ENCODE measurements at regions of chr13 and their contacts with region 1.

Region 1: DNA sequence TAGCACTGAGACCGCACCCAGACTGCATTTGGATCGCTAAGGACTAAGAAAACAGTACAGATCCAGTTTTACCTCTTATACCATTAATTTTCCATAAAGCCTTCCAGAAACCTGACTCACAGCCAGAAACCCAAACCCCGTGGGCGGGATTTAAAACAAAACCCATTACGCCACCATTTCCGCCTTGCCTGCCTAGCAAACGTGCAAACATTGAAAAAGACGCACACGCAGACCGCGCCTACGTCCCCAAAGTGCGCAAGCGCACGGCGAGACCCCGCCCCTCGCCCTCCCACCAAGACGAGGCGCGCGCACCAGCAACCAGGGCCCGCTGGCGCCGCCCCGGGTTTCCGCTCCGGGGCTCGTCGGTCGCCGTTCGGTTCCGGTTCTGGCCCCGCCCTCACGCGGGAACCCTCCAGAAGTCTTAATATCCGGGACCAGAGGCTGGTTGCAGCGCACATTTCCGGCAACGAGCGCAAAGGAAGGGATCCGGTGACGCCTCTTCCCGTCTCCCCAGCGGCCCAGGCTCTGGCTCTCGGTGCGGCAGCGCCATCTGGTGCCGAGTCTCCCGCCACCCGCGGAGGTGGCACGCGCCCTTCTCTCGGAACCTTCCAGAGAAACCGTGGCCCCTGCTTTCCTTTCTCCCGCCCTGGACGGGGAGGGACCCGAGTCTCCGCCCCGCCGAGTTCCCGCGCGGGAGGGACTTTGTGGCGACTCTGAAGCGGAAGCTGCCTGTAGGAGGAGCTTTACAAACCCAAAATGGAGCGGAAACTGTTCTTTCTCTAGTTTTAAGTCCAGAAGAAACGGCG is 256.9 kb upstream of the STARD13 start:
- DNase-seq: peak; percentile 98
- H3K4me3 Mint-ChIP-seq: peak overlapping the region; percentile 80
- H3K27ac Mint-ChIP-seq: peak overlapping the region; percentile 98
- H3K4me1 Mint-ChIP-seq: peaks cover 42% of the 10 kb centered on the region
- H3K27me3 Mint-ChIP-seq: no peaks in the 10 kb centered on the region

Region 2: GRCh38 chr13:32315238-32316027 is 1227.1 kb before region 1 on chr13 and contains the starts of genes BRCA2 and ZAR1L:
- intact Hi-C with region 1: loop called (anchors 1 kb)
- DNase-seq: peak; percentile 85
- H3K4me3 Mint-ChIP-seq: peak within 1 kb of the TSS; percentile 96
- H3K27ac Mint-ChIP-seq: peak within 1 kb of the TSS; percentile 100
- H3K4me1 Mint-ChIP-seq: peaks cover 32% of the 10 kb centered on the region
- H3K27me3 Mint-ChIP-seq: no peaks in the 10 kb centered on the region
- total RNA-seq, gene BRCA2: 18.6 and 19.4 TPM in 2 replicates
- total RNA-seq, gene ZAR1L: not detected in 2 replicates

Region 3: DNA sequence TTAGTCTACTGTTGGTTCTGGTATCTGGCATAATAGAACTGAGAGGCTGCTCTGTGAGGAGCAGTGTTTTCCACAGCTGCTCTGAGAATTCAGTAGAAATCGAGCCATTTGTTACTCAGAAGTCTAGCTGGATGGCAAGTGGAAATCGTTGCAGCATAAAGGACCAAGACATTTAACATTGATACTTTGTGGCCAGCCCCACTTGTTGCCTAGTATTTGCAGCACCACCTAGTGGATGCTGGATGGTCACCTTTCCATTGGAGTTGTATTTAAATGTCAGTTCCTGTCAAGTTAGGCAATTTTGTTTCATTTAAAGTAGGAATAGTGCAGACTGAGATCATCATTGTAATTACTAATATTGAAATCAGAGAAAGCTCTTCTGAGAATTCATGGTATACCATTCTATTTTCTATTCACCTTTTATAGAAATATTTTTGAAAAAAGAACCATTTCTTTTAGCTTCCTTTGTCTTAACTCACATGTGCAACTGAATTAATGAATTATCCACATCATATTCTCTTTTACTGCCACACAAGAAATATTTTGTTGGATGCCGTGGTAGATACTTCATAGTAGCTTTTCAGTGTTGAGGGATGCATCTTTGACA is 891.7 kb before region 1 on chr13:
- intact Hi-C with region 1: loop called (anchors 2 kb)
- DNase-seq: peak; percentile 41
- H3K4me3 Mint-ChIP-seq: no peak overlapping the region
- H3K27ac Mint-ChIP-seq: peak overlapping the region; percentile 70
- H3K4me1 Mint-ChIP-seq: peaks cover 35% of the 10 kb centered on the region
- H3K27me3 Mint-ChIP-seq: no peaks in the 10 kb centered on the region

Region 4: GRCh38 chr13:33072283-33072682 is 470.2 kb before region 1 on chr13:
- intact Hi-C with region 1: loop called (anchors 5 kb)
- DNase-seq: no peak
- H3K4me3 Mint-ChIP-seq: no peak overlapping the region
- H3K27ac Mint-ChIP-seq: no peak overlapping the region
- H3K4me1 Mint-ChIP-seq: peaks cover 19% of the 10 kb centered on the region
- H3K27me3 Mint-ChIP-seq: no peaks in the 10 kb centered on the region

Region 5: DNA sequence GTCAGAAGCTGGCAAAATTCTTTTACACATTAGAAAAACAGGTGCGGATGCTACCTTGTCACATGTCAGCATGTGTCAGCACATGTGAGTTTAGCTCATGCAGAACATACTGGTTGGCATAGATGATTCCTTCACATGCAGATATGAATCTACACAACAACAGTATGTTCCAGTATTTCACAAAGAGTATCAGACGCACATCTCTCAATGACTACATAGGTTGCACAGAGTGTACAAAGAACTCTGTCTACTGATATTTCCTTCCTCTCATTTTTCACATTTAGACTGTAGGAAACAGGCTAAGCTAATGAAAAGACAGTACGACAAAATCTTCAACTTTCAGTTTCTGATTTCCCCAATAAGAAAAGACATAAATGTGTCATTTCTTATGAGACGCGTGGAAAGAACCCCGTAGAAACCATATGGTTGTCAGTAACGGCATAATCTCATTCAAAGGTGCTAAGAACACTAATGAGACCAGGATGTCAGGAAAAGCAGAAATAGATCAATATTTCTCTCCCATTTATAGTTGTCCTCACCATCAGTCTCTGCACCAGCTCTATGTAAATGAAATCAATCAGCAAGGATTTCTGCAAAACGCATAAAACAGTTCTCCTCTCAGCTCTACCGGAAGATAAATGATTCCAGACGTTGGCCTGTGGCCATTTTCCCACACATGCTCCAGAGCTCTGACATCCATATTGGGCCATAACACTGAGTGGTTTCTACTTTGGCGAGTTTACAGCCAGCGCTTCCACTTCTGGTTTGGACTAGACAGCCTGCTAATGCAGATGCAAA is 338.2 kb before region 1 on chr13:
- intact Hi-C with region 1: loop called (anchors 5 kb)
- DNase-seq: no peak
- H3K4me3 Mint-ChIP-seq: peak overlapping the region; percentile 66
- H3K27ac Mint-ChIP-seq: peak overlapping the region; percentile 76
- H3K4me1 Mint-ChIP-seq: peaks cover 45% of the 10 kb centered on the region
- H3K27me3 Mint-ChIP-seq: no peaks in the 10 kb centered on the region

Region 6: DNA sequence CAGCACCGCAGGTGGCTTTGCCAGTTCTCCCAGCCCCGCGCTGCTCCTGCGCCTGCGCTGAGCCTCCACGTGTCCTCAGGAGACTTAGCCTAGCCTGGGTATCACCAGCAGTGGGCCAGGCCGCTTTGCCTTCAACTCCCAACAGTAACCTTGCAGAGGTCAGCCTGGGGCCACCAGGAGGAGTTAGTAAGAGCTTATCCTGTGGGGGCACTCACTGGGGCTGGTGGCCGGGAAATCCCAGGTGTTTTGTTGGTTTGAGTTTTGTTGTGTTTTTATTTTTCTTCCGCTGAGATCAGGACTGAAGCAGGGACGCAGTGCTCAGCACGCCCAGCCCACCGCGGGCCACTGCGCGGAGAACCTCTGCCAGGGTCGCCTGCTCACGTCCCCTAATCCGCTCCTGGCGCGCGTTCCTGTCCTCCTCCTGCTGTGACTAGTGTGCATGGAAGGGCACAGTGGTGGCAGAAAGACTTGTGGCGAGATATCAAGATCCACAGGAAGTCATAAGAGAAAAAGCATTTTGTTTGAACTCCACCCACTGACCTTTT is 68.1 kb after region 1 on chr13:
- intact Hi-C with region 1: loop called (anchors 1 kb)
- DNase-seq: peak; percentile 40
- H3K4me3 Mint-ChIP-seq: peak overlapping the region; percentile 70
- H3K27ac Mint-ChIP-seq: peak overlapping the region; percentile 95
- H3K4me1 Mint-ChIP-seq: peaks cover 50% of the 10 kb centered on the region
- H3K27me3 Mint-ChIP-seq: no peaks in the 10 kb centered on the region

Region 7: GRCh38 chr13:33817901-33818706 is 275.6 kb after region 1 on chr13 and contains the start of gene RFC3:
- intact Hi-C with region 1: loop called (anchors 2 kb)
- DNase-seq: peak; percentile 90
- H3K4me3 Mint-ChIP-seq: peak within 1 kb of the TSS; percentile 99
- H3K27ac Mint-ChIP-seq: peak within 1 kb of the TSS; percentile 96
- H3K4me1 Mint-ChIP-seq: peaks cover 37% of the 10 kb centered on the region
- H3K27me3 Mint-ChIP-seq: peaks cover 3% of the 10 kb centered on the region
- total RNA-seq, gene RFC3: 55.2 and 55.4 TPM in 2 replicates